Thyroid gland (tissue), 4 donors: ENCODE measurements at regions of chr11 and their contacts with region 1.

Region 1: DNA sequence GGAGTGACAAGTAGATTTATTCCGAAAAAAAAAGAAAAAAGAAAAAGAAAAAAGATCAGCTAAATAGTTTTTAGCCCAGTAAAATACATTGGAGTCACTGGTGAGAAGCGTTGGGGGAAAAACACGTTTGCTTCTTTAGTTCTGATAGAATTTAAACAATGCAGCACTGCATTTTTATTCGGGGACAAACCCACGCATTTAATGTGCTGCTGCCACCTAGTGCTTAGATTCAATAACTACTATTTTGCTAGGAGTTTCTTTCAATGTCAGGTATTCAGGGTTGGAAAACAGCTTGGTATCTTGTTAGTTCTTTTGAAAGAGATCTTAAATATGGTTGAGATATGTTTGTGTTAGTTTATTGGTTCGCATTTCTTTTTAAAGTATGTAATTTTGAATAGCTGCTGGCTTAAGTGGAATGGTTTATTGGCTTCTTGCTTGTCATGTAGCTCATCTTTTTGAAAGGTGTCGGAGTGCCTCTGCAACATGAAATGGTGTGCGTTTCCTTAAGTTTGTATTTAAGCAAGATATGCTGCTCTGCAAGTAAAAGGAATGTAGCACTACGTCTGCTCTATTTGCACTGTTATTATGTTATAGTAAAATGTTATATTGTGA is 41.9 kb downstream of the SVIP start:
- DNase-seq: peak; percentile 8 to 13
- H3K4me3 ChIP-seq: no peak overlapping the region
- H3K27ac ChIP-seq: no peak overlapping the region
- H3K4me1 ChIP-seq: no peaks in the 10 kb centered on the region
- H3K27me3 ChIP-seq: no peaks in the 10 kb centered on the region
- CTCF ChIP-seq: peak; percentile 26 to 81 (median 45)
- POLR2A ChIP-seq: no peak

Region 2: GRCh38 chr11:22337596-22338485 is 449.8 kb before region 1 on chr11 and contains the start of gene SLC17A6:
- intact Hi-C with region 1: loop called (anchors 10 kb)
- DNase-seq: peak in 1 of 2 donors; percentile 10
- H3K4me3 ChIP-seq: no peak within 1 kb of the TSS
- H3K27ac ChIP-seq: no peak within 1 kb of the TSS
- H3K4me1 ChIP-seq: no peaks in the 10 kb centered on the region
- H3K27me3 ChIP-seq: peaks cover 12% of the 10 kb centered on the region
- CTCF ChIP-seq: no peak
- POLR2A ChIP-seq: no peak
- total RNA-seq, gene SLC17A6: not detected